ENCODE measurements at regions of chr19 and their contacts with region 1.

Region 1: GRCh38 chr19:20776083-20777076 is at the start of gene ZNF66:
- DNase-seq: peak; percentile 99
- H3K4me3 ChIP-seq: peak within 1 kb of the TSS; percentile 67 to 77 (median 72)
- H3K27ac ChIP-seq: peak within 1 kb of the TSS; percentile 51 to 75 (median 64)
- H3K4me1 ChIP-seq: peaks cover 4 to 10% (median 6%) of the 10 kb centered on the region in 4 donors
- H3K27me3 ChIP-seq: no peaks in the 10 kb centered on the region
- CTCF ChIP-seq: no peak
- EP300 ChIP-seq: no peak
- POLR2A ChIP-seq: no peak
- total RNA-seq, gene ZNF66: 1.3 to 3.7 (median 2.1) TPM

Region 2: DNA sequence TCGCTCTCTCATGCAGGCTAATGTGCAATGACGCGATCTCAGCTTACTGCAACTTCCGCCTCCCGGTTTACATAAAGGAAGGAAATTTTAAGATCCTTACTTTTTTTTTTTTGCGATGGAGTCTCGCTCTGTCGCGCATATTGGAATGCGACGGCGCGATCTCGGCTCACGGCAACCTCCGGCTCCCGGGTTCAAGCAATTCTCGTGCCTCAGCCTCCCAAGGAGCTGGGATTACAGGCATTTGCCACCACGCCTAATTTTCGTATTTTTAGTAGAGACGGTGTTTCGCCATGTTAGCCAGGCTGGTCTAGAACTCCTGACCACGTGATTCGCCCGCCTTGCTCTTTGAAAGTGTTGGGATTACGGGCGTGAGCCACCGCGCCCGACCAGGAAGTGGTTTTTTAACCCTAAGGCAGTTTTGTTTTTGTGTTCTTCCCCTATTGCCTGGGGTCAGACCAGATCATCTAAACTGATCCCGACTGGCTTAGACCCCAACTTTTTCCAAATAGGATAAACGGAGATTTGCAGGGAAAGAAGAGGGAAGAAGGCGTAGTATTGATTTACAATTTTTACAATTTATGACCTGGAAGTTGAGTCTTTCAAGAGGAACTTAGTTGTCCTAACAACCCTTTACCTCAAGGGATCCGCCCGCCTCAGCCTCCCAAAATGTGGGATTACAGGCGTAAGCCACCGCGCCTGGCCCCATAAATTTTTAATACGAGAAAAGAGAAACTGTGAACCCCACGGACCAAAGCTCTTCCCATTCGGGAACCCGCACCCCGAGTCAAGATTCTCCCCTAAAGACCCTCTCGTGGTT is 352.8 kb before region 1 on chr19:
- intact Hi-C with region 1: loop called (anchors 10 kb)
- DNase-seq: no peak
- H3K4me3 ChIP-seq: peak overlapping the region; percentile 66 to 75 (median 70)
- H3K27ac ChIP-seq: peak overlapping the region; percentile 85 to 90 (median 88)
- H3K4me1 ChIP-seq: peaks cover 0 to 10% (median 6%) of the 10 kb centered on the region in 4 donors
- H3K27me3 ChIP-seq: no peaks in the 10 kb centered on the region
- CTCF ChIP-seq: no peak
- EP300 ChIP-seq: no peak
- POLR2A ChIP-seq: no peak

Region 3: GRCh38 chr19:20565321-20566018 is 210.9 kb before region 1 on chr19 and contains the start of gene ZNF737:
- intact Hi-C with region 1: loop called (anchors 5 kb)
- DNase-seq: peak; percentile 98
- H3K4me3 ChIP-seq: peak within 1 kb of the TSS; percentile 76 to 80 (median 77)
- H3K27ac ChIP-seq: peak within 1 kb of the TSS; percentile 87 to 90 (median 88)
- H3K4me1 ChIP-seq: peaks cover 10 to 46% (median 41%) of the 10 kb centered on the region in 4 donors
- H3K27me3 ChIP-seq: no peaks in the 10 kb centered on the region
- CTCF ChIP-seq: peak; percentile 12 to 53 (median 32)
- EP300 ChIP-seq: no peak
- POLR2A ChIP-seq: peak; percentile 27
- total RNA-seq, gene ZNF737: 8.0 to 11.0 (median 10.0) TPM

Region 4: DNA sequence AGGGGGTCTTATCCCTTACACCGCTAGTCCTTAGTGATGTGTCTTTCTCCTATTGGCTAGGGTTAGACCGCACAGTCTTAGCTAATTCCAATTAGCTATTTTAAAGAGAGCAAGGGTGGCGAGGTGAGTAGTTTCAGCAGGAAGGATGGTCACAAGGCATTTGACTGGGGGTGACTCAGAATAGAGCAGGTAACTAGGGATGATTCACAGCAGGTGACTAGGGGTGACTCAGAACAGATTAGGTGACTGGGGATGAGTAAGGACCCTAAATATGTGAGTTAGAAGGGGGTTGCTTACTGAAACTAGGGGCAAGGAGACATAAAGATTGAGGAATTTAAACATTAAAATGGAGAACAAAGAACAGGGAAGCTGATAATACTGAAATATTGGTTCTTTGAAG is 64.0 kb after region 1 on chr19:
- intact Hi-C with region 1: no loop called
- DNase-seq: no peak
- H3K4me3 ChIP-seq: no peak overlapping the region
- H3K27ac ChIP-seq: no peak overlapping the region
- H3K4me1 ChIP-seq: no peaks in the 10 kb centered on the region
- H3K27me3 ChIP-seq: no peaks in the 10 kb centered on the region
- CTCF ChIP-seq: no peak
- EP300 ChIP-seq: no peak
- POLR2A ChIP-seq: no peak

Region 5: GRCh38 chr19:21109116-21109515 is 332.7 kb after region 1 on chr19:
- intact Hi-C with region 1: no loop called
- DNase-seq: no peak
- H3K4me3 ChIP-seq: no peak overlapping the region
- H3K27ac ChIP-seq: no peak overlapping the region
- H3K4me1 ChIP-seq: no peaks in the 10 kb centered on the region
- H3K27me3 ChIP-seq: no peaks in the 10 kb centered on the region
- CTCF ChIP-seq: no peak
- EP300 ChIP-seq: no peak
- POLR2A ChIP-seq: no peak